Caco-2 (cell line): ENCODE measurements at regions of chrX and their contacts with region 1.

Region 1: DNA sequence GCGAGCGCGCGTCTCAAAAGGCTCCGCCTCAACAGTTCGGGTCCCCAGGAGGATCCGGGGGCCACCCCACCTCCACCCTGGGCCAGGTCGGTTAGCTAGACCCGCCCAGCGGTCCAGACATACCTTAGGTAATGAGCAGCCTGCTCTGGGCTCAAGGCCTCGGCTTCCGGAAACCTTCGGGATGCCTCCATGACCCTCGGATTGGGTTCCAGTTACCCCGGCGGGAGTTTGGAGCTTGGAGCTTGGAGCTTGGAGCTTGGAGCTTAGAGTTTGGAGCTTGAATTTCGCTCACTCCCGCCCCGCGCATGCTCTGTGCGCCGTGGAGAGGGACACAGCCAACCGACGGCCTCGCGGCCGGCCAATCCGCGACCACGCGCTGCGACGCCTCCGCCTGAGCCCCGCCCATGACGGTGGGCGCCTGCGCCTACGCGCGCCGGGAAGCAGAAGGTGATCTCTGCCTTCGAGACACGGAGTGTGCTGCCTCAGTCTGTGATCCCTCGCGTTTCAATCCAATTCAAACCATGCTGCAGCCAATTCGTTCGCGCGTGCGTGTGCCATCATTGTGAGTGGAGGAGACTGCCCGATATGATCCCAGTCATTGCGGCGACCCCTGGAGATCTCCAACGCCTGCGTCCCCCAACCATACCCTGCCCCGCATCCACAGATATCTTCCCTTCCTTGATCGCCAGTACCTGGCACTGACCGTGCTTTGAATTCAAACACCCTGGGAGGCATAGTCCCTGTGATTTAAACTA is at the start of gene ERCC6L:
- DNase-seq: peak; percentile 90
- H3K4me3 ChIP-seq: peak within 1 kb of the TSS; percentile 62
- H3K4me3 Mint-ChIP-seq: peak within 1 kb of the TSS; percentile 89
- H3K27ac Mint-ChIP-seq: peak within 1 kb of the TSS; percentile 50
- H3K4me1 ChIP-seq: no peaks in the 10 kb centered on the region
- H3K4me1 Mint-ChIP-seq: no peaks in the 10 kb centered on the region
- H3K27me3 ChIP-seq: no peaks in the 10 kb centered on the region; the same call in 1 of the 2 replicates
- H3K27me3 Mint-ChIP-seq: no peaks in the 10 kb centered on the region
- CTCF ChIP-seq: no peak
- total RNA-seq, gene ERCC6L: 9.7 and 10.2 TPM in 2 replicates

Region 2: GRCh38 chrX:72181178-72182125 is 57.4 kb before region 1 on chrX and contains the start of gene PIN4:
- CTCF ChIA-PET with region 1: no interaction called
- POLR2A ChIA-PET with region 1: interaction called, 14 read pairs
- intact Hi-C with region 1: loop called (anchors 1 kb)
- DNase-seq: peak; percentile 92 to 96
- H3K4me3 ChIP-seq: peak within 1 kb of the TSS; percentile 64
- H3K4me3 Mint-ChIP-seq: no peak within 1 kb of the TSS
- H3K27ac Mint-ChIP-seq: no peak within 1 kb of the TSS
- H3K4me1 ChIP-seq: no peaks in the 10 kb centered on the region
- H3K4me1 Mint-ChIP-seq: no peaks in the 10 kb centered on the region
- H3K27me3 ChIP-seq: no peaks in the 10 kb centered on the region
- H3K27me3 Mint-ChIP-seq: no peaks in the 10 kb centered on the region
- CTCF ChIP-seq: no peak
- total RNA-seq, gene PIN4: 11.7 and 12.2 TPM in 2 replicates

Region 3: GRCh38 chrX:72216973-72217372 is 21.9 kb before region 1 on chrX:
- CTCF ChIA-PET with region 1: no interaction called
- POLR2A ChIA-PET with region 1: no interaction called
- intact Hi-C with region 1: no loop called
- DNase-seq: no peak
- H3K4me3 ChIP-seq: no peak overlapping the region
- H3K4me3 Mint-ChIP-seq: no peak overlapping the region
- H3K27ac Mint-ChIP-seq: no peak overlapping the region
- H3K4me1 ChIP-seq: no peaks in the 10 kb centered on the region
- H3K4me1 Mint-ChIP-seq: peaks cover 8% of the 10 kb centered on the region
- H3K27me3 ChIP-seq: no peaks in the 10 kb centered on the region
- H3K27me3 Mint-ChIP-seq: no peaks in the 10 kb centered on the region
- CTCF ChIP-seq: no peak

Region 4: DNA sequence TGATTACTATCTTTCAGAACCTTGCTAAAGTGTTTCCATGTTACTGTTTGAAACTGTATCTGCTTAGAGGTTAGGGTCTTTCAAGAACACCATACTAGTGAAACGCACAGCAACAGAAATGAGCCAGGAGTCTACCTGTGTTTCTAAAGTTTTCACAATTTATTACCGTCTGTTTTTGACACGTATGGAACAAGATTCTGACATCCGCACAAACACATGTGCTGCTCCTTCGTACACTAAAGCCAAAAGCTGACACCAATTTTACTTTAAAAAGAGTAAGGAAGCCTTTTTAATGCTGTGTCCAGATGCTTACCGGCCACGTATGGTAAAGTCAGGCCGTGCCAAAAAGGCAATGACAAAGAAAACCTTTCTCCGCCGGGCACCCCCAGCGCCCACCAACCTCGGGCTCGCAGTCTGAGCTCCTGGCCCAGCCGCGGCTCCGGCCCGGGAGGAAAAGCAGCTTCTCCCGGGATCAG is 37.6 kb after region 1 on chrX:
- CTCF ChIA-PET with region 1: interaction called, 4 read pairs
- POLR2A ChIA-PET with region 1: interaction called, 13 read pairs
- intact Hi-C with region 1: no loop called
- DNase-seq: no peak
- H3K4me3 ChIP-seq: peak overlapping the region; percentile 63
- H3K4me3 Mint-ChIP-seq: peak overlapping the region; percentile 80
- H3K27ac Mint-ChIP-seq: peak overlapping the region; percentile 90
- H3K4me1 ChIP-seq: no peaks in the 10 kb centered on the region
- H3K4me1 Mint-ChIP-seq: peaks cover 16% of the 10 kb centered on the region
- H3K27me3 ChIP-seq: no peaks in the 10 kb centered on the region
- H3K27me3 Mint-ChIP-seq: no peaks in the 10 kb centered on the region
- CTCF ChIP-seq: no peak

Region 5: GRCh38 chrX:72604112-72604511 is 365.2 kb after region 1 on chrX:
- CTCF ChIA-PET with region 1: no interaction called
- POLR2A ChIA-PET with region 1: no interaction called
- intact Hi-C with region 1: no loop called
- DNase-seq: no peak
- H3K4me3 ChIP-seq: no peak overlapping the region
- H3K4me3 Mint-ChIP-seq: no peak overlapping the region
- H3K27ac Mint-ChIP-seq: no peak overlapping the region
- H3K4me1 ChIP-seq: no peaks in the 10 kb centered on the region
- H3K4me1 Mint-ChIP-seq: no peaks in the 10 kb centered on the region
- H3K27me3 ChIP-seq: no peaks in the 10 kb centered on the region
- H3K27me3 Mint-ChIP-seq: no peaks in the 10 kb centered on the region
- CTCF ChIP-seq: no peak